ENCODE measurements at regions of chr10 and their contacts with region 1.

Region 1: GRCh38 chr10:122368502-122369256 is 5.8 kb upstream of the PLEKHA1 start:
- DNase-seq: no peak
- ATAC-seq: no peak
- H3K4me3 ChIP-seq: no peak overlapping the region
- H3K27ac ChIP-seq: no peak overlapping the region
- H3K4me1 ChIP-seq: peaks cover 8% of the 10 kb centered on the region
- H3K27me3 ChIP-seq: no peaks in the 10 kb centered on the region
- CTCF ChIP-seq: no peak

Region 2: GRCh38 chr10:122391875-122392274 is 23.2 kb after region 1 on chr10:
- CTCF ChIA-PET with region 1: interaction called, 15 read pairs
- POLR2A ChIA-PET with region 1: no interaction called
- in situ Hi-C with region 1: no loop called
- intact Hi-C with region 1: no loop called
- DNase-seq: no peak
- ATAC-seq: no peak
- H3K4me3 ChIP-seq: no peak overlapping the region
- H3K27ac ChIP-seq: no peak overlapping the region; the same call in 1 of the 2 replicates
- H3K4me1 ChIP-seq: peaks cover 8% of the 10 kb centered on the region; the same call in 1 of the 2 replicates
- H3K27me3 ChIP-seq: no peaks in the 10 kb centered on the region
- CTCF ChIP-seq: no peak

Region 3: DNA sequence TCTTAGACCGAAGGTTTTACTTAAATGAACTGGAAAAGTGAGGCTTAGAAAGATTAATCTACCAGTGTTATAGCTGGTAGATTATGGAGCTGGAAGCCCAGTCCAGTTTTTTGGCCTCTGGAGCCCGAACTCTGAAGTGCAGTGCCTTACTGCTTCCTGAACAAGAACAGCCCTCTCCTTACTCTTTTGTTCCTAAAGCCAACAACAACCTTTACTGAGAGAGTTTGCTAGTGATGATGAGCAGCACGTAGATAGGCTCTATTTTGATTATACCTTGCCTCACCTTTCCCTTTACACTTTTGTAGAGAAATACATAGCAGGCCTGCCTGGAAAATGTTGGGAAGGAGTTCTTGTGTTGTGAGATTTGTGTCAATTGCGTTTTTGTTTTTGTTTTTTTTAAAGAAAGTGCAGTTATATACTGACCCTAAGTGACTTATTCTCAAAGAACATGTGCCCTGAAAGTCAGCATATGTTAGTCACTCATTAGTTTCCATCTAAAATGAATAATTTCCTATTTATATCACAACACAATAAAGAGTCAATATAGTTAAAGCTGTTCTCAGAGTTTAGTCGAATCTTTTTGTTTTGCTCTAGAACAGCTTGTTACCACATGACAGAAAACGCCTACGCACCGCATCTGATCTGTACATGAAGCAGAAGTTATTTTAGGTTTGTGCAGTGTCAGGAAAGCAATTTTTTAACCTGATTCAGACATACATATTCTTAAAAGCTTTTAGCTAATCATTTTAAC is 38.9 kb after region 1 on chr10:
- CTCF ChIA-PET with region 1: no interaction called
- POLR2A ChIA-PET with region 1: no interaction called
- in situ Hi-C with region 1: no loop called
- intact Hi-C with region 1: no loop called
- DNase-seq: no peak
- ATAC-seq: 0 out of 2 replicates have a peak, but pooled peaks have one; percentile 48
- H3K4me3 ChIP-seq: no peak overlapping the region
- H3K27ac ChIP-seq: no peak overlapping the region
- H3K4me1 ChIP-seq: no peaks in the 10 kb centered on the region
- H3K27me3 ChIP-seq: no peaks in the 10 kb centered on the region
- CTCF ChIP-seq: no peak